CD8-positive, alpha-beta T cell (primary cell): ENCODE measurements at regions of chr5 and their contacts with region 1.

Region 1: DNA sequence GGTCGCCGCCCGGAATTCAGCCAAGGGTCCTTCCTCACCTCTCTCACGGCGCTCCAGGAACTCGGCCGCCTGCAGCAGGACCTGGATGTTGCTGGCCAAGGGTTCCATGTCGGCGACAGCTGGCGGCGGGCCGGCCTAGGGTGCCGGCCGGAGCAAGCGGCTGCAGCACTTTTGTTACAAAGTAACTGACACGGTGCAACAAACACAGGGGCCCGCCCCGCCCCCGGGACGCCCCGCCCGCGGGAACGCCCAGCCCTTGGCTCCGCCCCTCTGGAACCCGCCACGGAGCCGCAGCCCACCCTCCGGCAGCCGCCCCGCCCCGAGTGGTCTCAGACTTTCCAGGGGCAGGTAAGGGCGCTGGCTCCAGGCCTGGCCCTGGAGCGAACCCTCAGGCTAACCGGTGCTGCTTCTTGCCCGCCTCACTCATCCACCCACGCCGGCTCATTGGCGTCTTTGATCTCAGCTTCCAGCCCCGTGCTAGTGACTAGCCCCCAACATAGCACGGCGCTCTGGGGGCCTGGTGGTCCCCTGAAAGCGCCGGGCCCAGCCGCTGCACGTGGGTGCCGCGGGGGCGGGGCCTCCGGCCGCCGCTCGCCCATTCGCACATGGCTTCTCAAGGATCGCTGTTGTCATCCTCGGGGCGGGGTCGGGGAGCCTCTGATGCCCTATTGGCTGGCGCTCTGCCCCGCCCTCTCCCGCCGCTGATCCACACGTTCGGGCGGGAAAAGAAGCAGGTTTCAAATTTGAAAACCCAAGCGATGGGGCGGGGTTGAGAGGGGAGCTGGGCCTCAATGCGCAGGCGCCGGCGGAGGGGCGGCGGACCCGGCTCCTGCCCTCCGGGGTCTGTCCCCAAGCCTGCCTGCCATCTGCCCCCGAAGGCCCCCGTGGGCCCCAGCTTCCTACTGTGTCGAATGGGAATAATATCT is at the start of gene MXD3:
- DNase-seq: peak; percentile 88 to 96 (median 94)
- ATAC-seq: peak; percentile 91
- H3K4me3 ChIP-seq: peak within 1 kb of the TSS; percentile 63 to 79
- H3K4me3 Mint-ChIP-seq: peak within 1 kb of the TSS; percentile 80
- H3K27ac ChIP-seq: peak within 1 kb of the TSS in 1 of 2 experiments; percentile 58
- H3K27ac Mint-ChIP-seq: peak within 1 kb of the TSS; percentile 49
- H3K4me1 ChIP-seq: peaks cover 36% of the 10 kb centered on the region
- H3K4me1 Mint-ChIP-seq: peaks cover 25% of the 10 kb centered on the region
- H3K27me3 ChIP-seq: no peaks in the 10 kb centered on the region
- H3K27me3 Mint-ChIP-seq: peaks cover 2% of the 10 kb centered on the region
- CTCF ChIP-seq: no peak
- total RNA-seq, gene MXD3: 6.2 to 8.5 TPM

Region 2: GRCh38 chr5:177249761-177250526 is 62.0 kb before region 1 on chr5:
- CTCF ChIA-PET with region 1: no interaction called
- POLR2A ChIA-PET with region 1: no interaction called
- intact Hi-C with region 1: no loop called
- DNase-seq: no peak
- ATAC-seq: no peak
- H3K4me3 ChIP-seq: no peak overlapping the region
- H3K4me3 Mint-ChIP-seq: no peak overlapping the region
- H3K27ac ChIP-seq: no peak overlapping the region
- H3K27ac Mint-ChIP-seq: peak overlapping the region; percentile 7
- H3K4me1 ChIP-seq: no peaks in the 10 kb centered on the region
- H3K4me1 Mint-ChIP-seq: no peaks in the 10 kb centered on the region
- H3K27me3 ChIP-seq: no peaks in the 10 kb centered on the region
- H3K27me3 Mint-ChIP-seq: no peaks in the 10 kb centered on the region
- CTCF ChIP-seq: no peak

Region 3: GRCh38 chr5:177265395-177265794 is 46.6 kb before region 1 on chr5:
- CTCF ChIA-PET with region 1: no interaction called
- POLR2A ChIA-PET with region 1: no interaction called
- intact Hi-C with region 1: no loop called
- DNase-seq: no peak
- ATAC-seq: no peak
- H3K4me3 ChIP-seq: no peak overlapping the region
- H3K4me3 Mint-ChIP-seq: no peak overlapping the region
- H3K27ac ChIP-seq: no peak overlapping the region
- H3K27ac Mint-ChIP-seq: no peak overlapping the region
- H3K4me1 ChIP-seq: no peaks in the 10 kb centered on the region
- H3K4me1 Mint-ChIP-seq: peaks cover 2% of the 10 kb centered on the region
- H3K27me3 ChIP-seq: no peaks in the 10 kb centered on the region
- H3K27me3 Mint-ChIP-seq: no peaks in the 10 kb centered on the region
- CTCF ChIP-seq: no peak

Region 4: GRCh38 chr5:177357459-177358351 is 45.7 kb after region 1 on chr5 and contains the start of gene RGS14:
- CTCF ChIA-PET with region 1: interaction called, 36 read pairs
- POLR2A ChIA-PET with region 1: no interaction called
- intact Hi-C with region 1: loop called in 1 of 2 experiments (anchors 1 kb)
- DNase-seq: peak; percentile 36 to 91 (median 75)
- ATAC-seq: peak; percentile 87
- H3K4me3 ChIP-seq: peak within 1 kb of the TSS; percentile 90 to 95
- H3K4me3 Mint-ChIP-seq: peak within 1 kb of the TSS; percentile 84
- H3K27ac ChIP-seq: peak within 1 kb of the TSS; percentile 67 to 74
- H3K27ac Mint-ChIP-seq: peak within 1 kb of the TSS; percentile 94
- H3K4me1 ChIP-seq: peaks cover 67% of the 10 kb centered on the region
- H3K4me1 Mint-ChIP-seq: peaks cover 77% of the 10 kb centered on the region
- H3K27me3 ChIP-seq: no peaks in the 10 kb centered on the region
- H3K27me3 Mint-ChIP-seq: no peaks in the 10 kb centered on the region
- CTCF ChIP-seq: no peak
- total RNA-seq, gene RGS14: 22.7 to 23.5 TPM

Region 5: DNA sequence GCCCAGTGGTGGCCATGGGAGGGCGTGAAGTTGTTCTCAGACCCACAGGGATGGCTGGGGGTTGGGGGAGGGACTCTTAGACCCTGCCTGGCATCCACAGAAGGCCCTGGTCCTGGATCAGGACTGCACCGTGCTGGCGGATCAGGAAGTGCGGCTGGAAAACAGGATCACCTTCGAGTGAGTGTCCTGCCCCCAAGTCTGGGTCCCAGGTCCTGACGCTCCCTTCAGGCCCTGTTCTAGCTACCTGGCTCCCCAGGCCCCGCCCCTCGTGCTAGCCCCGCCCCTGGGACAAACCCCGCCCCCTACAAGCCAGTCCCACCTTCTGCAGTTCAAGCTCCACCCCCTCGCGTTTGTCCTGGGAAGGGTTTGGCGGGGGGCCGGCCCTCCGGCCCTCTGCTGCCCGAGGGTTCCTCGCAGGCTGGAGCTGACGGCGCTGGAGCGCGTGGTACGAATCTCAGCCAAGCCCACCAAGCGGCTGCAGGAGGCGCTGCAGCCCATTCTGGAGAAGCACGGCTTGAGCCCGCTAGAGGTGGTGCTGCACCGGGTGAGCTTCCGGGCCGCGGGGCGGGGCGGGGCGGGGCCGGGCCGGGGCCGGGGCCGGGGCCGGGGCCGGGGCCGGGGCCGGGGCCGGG is 58.6 kb after region 1 on chr5:
- CTCF ChIA-PET with region 1: interaction called, 11 read pairs
- POLR2A ChIA-PET with region 1: no interaction called
- intact Hi-C with region 1: no loop called
- DNase-seq: peak in 8 of 9 experiments; percentile 18 to 81 (median 58)
- ATAC-seq: peak; percentile 63
- H3K4me3 ChIP-seq: no peak overlapping the region
- H3K4me3 Mint-ChIP-seq: no peak overlapping the region
- H3K27ac ChIP-seq: peak overlapping the region in 1 of 2 experiments; percentile 48
- H3K27ac Mint-ChIP-seq: peak overlapping the region; percentile 32
- H3K4me1 ChIP-seq: peaks cover 73% of the 10 kb centered on the region
- H3K4me1 Mint-ChIP-seq: peaks cover 69% of the 10 kb centered on the region
- H3K27me3 ChIP-seq: no peaks in the 10 kb centered on the region
- H3K27me3 Mint-ChIP-seq: no peaks in the 10 kb centered on the region
- CTCF ChIP-seq: no peak

Region 6: DNA sequence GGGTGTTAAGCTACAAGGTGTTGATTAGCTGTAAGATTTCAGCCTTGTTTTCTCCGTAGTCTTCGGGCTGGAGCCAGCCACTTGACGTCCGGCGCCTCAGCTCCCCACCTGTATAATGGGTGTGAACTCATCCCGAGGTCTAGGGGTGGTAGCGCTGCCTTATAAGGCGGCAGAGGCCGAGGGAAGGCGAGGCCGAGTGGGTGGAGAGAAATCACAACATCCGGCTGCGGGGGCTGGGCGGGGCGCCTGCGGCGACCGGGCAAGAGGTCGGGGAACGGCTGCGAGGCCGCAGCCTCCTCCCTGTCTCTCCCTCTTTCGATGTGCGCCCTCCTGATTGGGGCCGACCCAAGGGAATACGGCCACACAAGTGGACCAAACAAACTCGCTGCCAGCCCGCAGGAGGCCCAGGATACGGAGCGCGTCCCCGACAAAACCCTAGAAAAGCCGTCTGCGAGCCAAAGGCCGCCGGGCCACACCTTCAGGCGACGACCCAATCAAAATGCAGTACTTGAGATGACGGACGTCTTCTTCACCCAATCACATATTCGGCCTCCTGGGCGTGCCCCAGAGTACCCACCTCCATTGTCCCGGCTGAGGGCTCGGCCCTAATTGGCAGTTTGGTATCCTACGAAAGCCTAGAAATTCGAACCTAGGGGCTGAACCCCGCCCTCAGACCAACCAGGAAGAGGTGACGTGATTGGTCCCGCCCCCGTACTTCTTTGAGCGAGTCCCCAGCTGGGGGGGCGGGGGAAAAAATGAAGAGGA is 114.0 kb after region 1 on chr5:
- CTCF ChIA-PET with region 1: interaction called, 11 read pairs
- POLR2A ChIA-PET with region 1: interaction called, 3 read pairs
- intact Hi-C with region 1: loop called in 1 of 2 experiments (anchors 1 kb)
- DNase-seq: peak; percentile 99 to 100 (median 99)
- ATAC-seq: peak; percentile 80
- H3K4me3 ChIP-seq: peak overlapping the region; percentile 63 to 65
- H3K4me3 Mint-ChIP-seq: peak overlapping the region; percentile 91
- H3K27ac ChIP-seq: peak overlapping the region; percentile 86 to 92
- H3K27ac Mint-ChIP-seq: peak overlapping the region; percentile 98
- H3K4me1 ChIP-seq: peaks cover 46% of the 10 kb centered on the region
- H3K4me1 Mint-ChIP-seq: peaks cover 53% of the 10 kb centered on the region
- H3K27me3 ChIP-seq: no peaks in the 10 kb centered on the region
- H3K27me3 Mint-ChIP-seq: no peaks in the 10 kb centered on the region
- CTCF ChIP-seq: no peak

Region 7: DNA sequence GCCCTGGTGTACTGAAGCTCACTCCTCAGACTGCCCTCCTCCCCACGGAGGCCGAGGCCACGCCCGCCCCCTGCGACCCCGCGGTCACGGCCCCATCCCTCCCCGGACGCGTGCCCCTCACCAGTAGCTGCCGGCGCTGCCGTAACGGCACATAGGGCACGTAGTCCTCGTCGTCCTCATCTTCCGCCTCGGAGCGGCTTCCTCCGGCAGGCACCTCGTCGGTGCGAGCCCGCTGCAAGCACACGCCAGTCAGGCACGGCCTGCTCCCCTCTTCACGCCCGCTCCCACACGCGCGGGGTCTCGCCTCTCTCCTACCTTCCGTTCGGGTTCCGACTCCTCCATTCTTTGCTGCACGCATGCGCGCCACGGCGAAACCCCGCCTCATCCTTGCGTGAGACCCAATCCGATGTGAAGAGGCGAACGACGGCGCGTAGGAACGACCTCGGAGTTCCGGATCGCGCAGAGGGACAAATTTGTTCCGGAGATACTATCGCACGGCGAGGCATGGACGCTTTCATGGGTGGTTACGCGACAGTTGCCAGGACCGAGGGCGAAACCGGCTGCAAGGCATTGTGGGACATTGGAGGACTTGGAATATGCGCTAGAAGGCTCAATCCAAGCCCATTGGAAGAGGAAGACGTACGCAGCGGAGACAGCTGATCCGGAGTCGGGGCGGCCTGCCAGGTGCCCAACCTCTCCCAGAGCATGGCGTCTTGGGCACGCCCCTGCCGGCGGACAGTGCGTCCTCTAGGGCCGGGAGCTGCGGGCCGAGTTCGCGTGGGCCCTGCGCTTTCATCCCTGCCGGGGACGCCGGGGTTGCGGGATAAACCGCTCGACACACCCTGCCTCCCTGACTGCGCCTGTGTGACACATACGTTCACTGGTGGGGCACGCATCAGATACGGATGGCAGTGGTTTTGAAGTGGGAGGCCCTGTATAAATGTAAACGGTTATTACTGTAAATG is 204.9 kb after region 1 on chr5 and contains the start of gene DDX41:
- CTCF ChIA-PET with region 1: interaction called, 3 read pairs
- POLR2A ChIA-PET with region 1: no interaction called
- intact Hi-C with region 1: loop called in 1 of 2 experiments (anchors 5 kb)
- DNase-seq: peak; percentile 88 to 98 (median 95)
- ATAC-seq: peak; percentile 88
- H3K4me3 ChIP-seq: peak within 1 kb of the TSS; percentile 95
- H3K4me3 Mint-ChIP-seq: peak within 1 kb of the TSS; percentile 94
- H3K27ac ChIP-seq: peak within 1 kb of the TSS; percentile 61 to 73
- H3K27ac Mint-ChIP-seq: peak within 1 kb of the TSS; percentile 93
- H3K4me1 ChIP-seq: peaks cover 31% of the 10 kb centered on the region
- H3K4me1 Mint-ChIP-seq: peaks cover 46% of the 10 kb centered on the region
- H3K27me3 ChIP-seq: no peaks in the 10 kb centered on the region
- H3K27me3 Mint-ChIP-seq: no peaks in the 10 kb centered on the region
- CTCF ChIP-seq: no peak
- total RNA-seq, gene DDX41: 66.8 to 71.0 TPM